PC-3 (cell line): ENCODE measurements at regions of chr9 and their contacts with region 1.

Region 1: DNA sequence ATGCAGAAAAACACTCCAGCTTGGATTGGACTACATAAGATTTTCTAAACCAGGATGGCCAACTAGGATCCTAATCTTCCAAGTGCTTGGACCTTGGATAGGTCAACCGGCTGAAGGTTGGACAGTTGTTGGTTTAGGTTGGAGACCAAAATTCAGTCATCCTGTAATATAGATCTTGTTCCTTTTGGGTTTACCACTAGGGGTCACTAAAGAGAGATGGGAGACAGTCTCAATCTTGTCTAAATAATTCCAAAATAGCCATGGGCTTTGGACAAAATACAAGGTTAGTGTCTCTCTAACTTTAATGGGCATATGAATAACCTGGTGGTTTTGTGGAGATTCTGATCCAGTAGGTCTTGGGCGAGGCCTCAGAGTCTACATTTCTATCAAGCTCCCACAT is 148.7 kb upstream of the ERCC6L2 start:
- DNase-seq: peak; percentile 62
- ATAC-seq: no peak
- H3K4me3 ChIP-seq: no peak overlapping the region
- H3K27ac ChIP-seq: no peak overlapping the region
- H3K4me1 ChIP-seq: no peaks in the 10 kb centered on the region; the same call in 1 of the 2 replicates
- H3K27me3 ChIP-seq: no peaks in the 10 kb centered on the region
- CTCF ChIP-seq: peak; percentile 68

Region 2: GRCh38 chr9:95641586-95641985 is 85.2 kb before region 1 on chr9:
- CTCF ChIA-PET with region 1: no interaction called
- POLR2A ChIA-PET with region 1: no interaction called
- intact Hi-C with region 1: no loop called
- DNase-seq: peak; percentile 17
- ATAC-seq: no peak
- H3K4me3 ChIP-seq: no peak overlapping the region
- H3K27ac ChIP-seq: no peak overlapping the region
- H3K4me1 ChIP-seq: no peaks in the 10 kb centered on the region
- H3K27me3 ChIP-seq: peaks cover 17% of the 10 kb centered on the region
- CTCF ChIP-seq: no peak

Region 3: DNA sequence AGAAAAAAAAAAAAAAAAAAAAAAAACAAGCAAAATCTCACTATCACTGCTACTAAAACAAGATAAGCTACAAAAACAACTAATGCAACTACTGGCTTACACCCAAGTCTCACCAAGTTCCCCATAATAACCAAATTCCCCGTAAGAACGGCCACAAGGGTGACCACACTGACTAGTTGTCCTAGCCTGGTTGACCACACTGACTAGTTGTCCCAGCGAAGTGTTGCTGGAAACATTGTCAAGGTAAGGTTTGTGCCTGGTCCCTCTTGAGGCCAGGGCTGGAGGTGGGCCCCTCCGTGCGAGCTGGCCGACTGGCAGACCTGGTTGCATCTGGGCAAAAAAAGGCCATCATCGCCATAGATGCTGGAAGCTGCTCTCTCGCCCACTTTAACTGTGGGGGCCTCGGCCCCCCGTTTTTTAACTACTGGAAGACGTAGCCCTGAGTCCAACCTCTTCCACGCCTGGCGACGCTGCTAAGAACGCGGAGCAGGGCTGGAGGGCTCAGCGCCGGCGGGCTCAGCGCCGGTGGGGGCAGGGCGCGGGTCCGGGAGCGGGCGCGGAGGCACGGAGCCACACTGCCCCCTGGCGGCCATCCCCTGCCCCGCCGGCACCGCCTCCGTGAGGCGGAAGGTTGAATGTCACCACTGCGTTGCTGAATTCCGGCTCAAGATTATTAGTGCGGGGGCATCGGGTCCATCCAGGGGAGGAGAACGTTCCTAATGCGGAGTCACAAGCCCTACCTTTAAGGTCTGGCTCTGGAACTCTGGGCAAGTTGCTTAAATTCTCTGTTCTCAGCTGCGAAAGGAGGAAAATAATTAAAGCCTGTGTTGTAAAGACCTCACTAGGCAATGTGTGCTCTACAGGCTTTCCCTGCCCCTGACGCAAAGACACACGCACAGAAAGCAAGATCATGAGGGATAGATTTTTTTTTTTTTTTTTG is 491.3 kb after region 1 on chr9:
- CTCF ChIA-PET with region 1: no interaction called
- POLR2A ChIA-PET with region 1: no interaction called
- intact Hi-C with region 1: loop called (anchors 5 kb)
- DNase-seq: peak; percentile 67
- ATAC-seq: peak; percentile 93
- H3K4me3 ChIP-seq: peak overlapping the region; percentile 62
- H3K27ac ChIP-seq: no peak overlapping the region
- H3K4me1 ChIP-seq: no peaks in the 10 kb centered on the region
- H3K27me3 ChIP-seq: no peaks in the 10 kb centered on the region
- CTCF ChIP-seq: peak; percentile 87